Panc1 (cell line): ENCODE measurements at regions of chr10 and their contacts with region 1.

Region 1: GRCh38 chr10:25875556-25876165 is 58.4 kb upstream of the MYO3A start:
- DNase-seq: peak; percentile 51
- ATAC-seq: peak; percentile 68; the same call in 1 of the 2 replicates
- H3K4me3 ChIP-seq: no peak overlapping the region
- H3K27ac ChIP-seq: no peak overlapping the region
- H3K4me1 ChIP-seq: no peaks in the 10 kb centered on the region
- H3K27me3 ChIP-seq: no peaks in the 10 kb centered on the region
- CTCF ChIP-seq: peak; percentile 87

Region 2: GRCh38 chr10:25615926-25616325 is 259.7 kb before region 1 on chr10:
- CTCF ChIA-PET with region 1: no interaction called
- POLR2A ChIA-PET with region 1: no interaction called
- in situ Hi-C with region 1: no loop called
- intact Hi-C with region 1: no loop called
- DNase-seq: no peak
- ATAC-seq: no peak
- H3K4me3 ChIP-seq: no peak overlapping the region
- H3K27ac ChIP-seq: no peak overlapping the region
- H3K4me1 ChIP-seq: no peaks in the 10 kb centered on the region
- H3K27me3 ChIP-seq: no peaks in the 10 kb centered on the region
- CTCF ChIP-seq: no peak

Region 3: DNA sequence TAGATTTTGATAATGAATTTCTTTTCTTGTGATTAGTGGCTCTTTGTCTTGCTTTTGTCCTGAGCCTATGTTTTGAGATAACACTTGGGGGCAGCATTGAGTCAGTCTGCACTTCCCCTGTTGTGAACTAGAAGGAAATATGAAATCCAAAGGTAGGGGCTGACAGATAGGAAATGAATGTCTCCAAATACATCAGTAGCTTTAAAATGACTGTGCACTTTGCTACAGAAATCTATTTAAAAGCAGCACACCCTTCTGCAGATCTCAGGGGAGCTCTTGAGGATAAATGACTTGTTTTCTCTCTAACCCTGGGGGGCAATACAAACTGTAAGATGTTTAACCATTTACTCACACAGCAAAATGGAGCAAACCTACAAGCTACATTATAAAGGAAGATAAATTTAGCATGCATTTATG is 117.6 kb before region 1 on chr10:
- CTCF ChIA-PET with region 1: no interaction called
- POLR2A ChIA-PET with region 1: no interaction called
- in situ Hi-C with region 1: no loop called
- intact Hi-C with region 1: loop called (anchors 10 kb)
- DNase-seq: no peak
- ATAC-seq: no peak
- H3K4me3 ChIP-seq: no peak overlapping the region
- H3K27ac ChIP-seq: no peak overlapping the region
- H3K4me1 ChIP-seq: no peaks in the 10 kb centered on the region
- H3K27me3 ChIP-seq: no peaks in the 10 kb centered on the region
- CTCF ChIP-seq: peak; percentile 51; the same call in 1 of the 2 replicates

Region 4: DNA sequence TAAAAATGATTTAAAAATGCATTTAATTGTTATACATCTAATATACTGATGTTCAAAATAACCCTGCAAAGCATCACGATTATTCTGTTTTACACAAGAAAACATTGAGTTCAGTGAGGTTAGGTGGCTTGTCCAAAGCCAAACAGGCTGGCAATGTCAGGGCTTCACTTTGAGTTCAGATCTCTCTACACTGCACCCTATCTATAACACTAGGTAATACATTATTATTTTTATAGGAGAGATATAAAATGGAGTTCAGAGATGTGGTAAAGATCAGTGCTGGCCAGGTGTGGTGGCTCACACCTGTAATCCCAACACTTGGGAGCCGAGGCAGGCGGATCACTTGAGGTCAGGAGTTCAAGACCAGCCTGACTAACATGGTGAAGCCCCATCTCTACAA is 107.5 kb before region 1 on chr10:
- CTCF ChIA-PET with region 1: no interaction called
- POLR2A ChIA-PET with region 1: no interaction called
- in situ Hi-C with region 1: no loop called
- intact Hi-C with region 1: no loop called
- DNase-seq: no peak
- ATAC-seq: no peak
- H3K4me3 ChIP-seq: no peak overlapping the region
- H3K27ac ChIP-seq: no peak overlapping the region
- H3K4me1 ChIP-seq: no peaks in the 10 kb centered on the region
- H3K27me3 ChIP-seq: no peaks in the 10 kb centered on the region
- CTCF ChIP-seq: peak; percentile 11; the same call in 1 of the 2 replicates

Region 5: DNA sequence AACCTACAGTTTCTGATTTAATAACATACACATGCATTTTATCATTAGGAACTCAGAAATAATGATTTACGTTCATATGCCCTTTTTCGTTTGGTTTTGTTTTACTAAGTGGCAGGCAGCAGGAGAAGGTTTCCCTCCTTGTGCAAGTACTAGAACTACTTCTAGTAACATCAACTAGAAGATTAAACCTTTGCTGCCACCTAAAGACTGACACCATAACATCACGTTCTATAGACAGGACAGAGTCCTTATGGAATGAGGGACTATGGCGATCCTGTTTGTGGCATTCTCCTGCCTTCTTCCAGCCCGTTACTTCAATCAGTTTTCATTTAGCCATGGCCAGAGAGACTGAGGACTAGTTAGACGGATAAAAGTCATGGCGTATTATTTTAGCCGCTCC is 394.1 kb after region 1 on chr10:
- CTCF ChIA-PET with region 1: interaction called, 4 read pairs
- POLR2A ChIA-PET with region 1: no interaction called
- in situ Hi-C with region 1: no loop called
- intact Hi-C with region 1: loop called (anchors 2 kb)
- DNase-seq: peak; percentile 13
- ATAC-seq: peak; percentile 77
- H3K4me3 ChIP-seq: no peak overlapping the region
- H3K27ac ChIP-seq: no peak overlapping the region
- H3K4me1 ChIP-seq: peaks cover 3% of the 10 kb centered on the region; the same call in 1 of the 2 replicates
- H3K27me3 ChIP-seq: no peaks in the 10 kb centered on the region
- CTCF ChIP-seq: peak; percentile 38; the same call in 1 of the 2 replicates

Region 6: DNA sequence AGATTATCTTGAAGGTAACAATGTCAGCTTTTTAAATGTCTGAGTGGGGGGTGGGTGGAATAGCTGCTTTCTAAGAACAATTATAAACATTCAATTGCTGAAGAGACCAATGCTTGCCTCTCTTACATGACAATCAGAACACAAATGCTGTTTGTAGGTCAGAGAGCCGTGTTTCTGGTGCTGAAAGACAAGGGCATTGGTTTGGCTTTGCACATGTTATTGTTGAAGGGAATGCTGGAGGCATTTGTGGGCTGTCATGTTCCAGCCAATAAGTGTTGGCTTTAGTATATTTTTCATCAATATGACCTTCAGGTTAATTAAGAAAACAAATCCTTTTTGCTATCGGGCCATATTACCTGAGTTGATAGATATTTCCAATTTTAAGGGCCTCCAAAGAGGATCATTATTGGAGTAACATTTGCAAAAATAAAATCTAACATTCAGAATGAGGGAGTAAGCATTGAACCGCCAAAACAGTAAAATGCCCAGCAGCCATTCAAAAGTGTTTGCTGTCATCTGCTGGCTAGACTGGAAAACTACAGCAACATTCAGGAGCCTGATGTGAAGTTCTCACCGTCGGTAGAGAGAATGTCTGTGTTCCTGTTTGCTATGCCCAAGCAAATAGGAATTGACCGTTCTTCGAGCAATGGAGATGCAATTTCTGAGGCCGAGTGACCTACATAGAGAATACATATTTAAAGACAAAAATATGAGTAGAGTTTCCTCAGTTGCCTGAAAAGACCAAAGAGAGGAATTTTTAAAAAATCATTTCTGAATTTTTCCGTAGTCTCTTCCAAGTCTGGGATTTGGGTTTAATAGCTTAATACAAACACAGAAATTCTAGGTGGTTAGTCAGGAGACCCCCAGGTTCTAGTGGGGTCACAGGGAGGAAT is 681.3 kb after region 1 on chr10:
- CTCF ChIA-PET with region 1: no interaction called
- POLR2A ChIA-PET with region 1: no interaction called
- in situ Hi-C with region 1: no loop called
- intact Hi-C with region 1: loop called (anchors 10 kb)
- DNase-seq: peak; percentile 51
- ATAC-seq: 0 out of 2 replicates have a peak, but pooled peaks have one; percentile 62
- H3K4me3 ChIP-seq: no peak overlapping the region
- H3K27ac ChIP-seq: no peak overlapping the region
- H3K4me1 ChIP-seq: no peaks in the 10 kb centered on the region; the same call in 1 of the 2 replicates
- H3K27me3 ChIP-seq: no peaks in the 10 kb centered on the region
- CTCF ChIP-seq: peak; percentile 82